ENCODE measurements at regions of chr1 and their contacts with region 1.

Region 1: GRCh38 chr1:154558575-154559465 is at the start of gene UBE2Q1:
- DNase-seq: peak; percentile 99
- H3K4me3 ChIP-seq: peak within 1 kb of the TSS; percentile 92
- H3K27ac ChIP-seq: peak within 1 kb of the TSS; percentile 67
- H3K4me1 ChIP-seq: peaks cover 26% of the 10 kb centered on the region
- H3K27me3 ChIP-seq: no peaks in the 10 kb centered on the region
- CTCF ChIP-seq: no peak
- POLR2A ChIP-seq: peak; percentile 57
- total RNA-seq, gene UBE2Q1: 85.4 and 97.2 TPM in 2 replicates

Region 2: GRCh38 chr1:154324669-154325582 is 233.9 kb before region 1 on chr1 and contains the start of gene ATP8B2:
- CTCF ChIA-PET with region 1: interaction called, 3 read pairs
- POLR2A ChIA-PET with region 1: no interaction called
- dilution Hi-C with region 1: no loop called
- intact Hi-C with region 1: loop called (anchors 2 kb)
- DNase-seq: peak; percentile 79
- H3K4me3 ChIP-seq: peak within 1 kb of the TSS; percentile 78 to 88 (median 85)
- H3K27ac ChIP-seq: peak within 1 kb of the TSS; percentile 52
- H3K4me1 ChIP-seq: peaks cover 22% of the 10 kb centered on the region
- H3K27me3 ChIP-seq: peaks cover 0 to 8% of the 10 kb centered on the region in 2 experiments
- CTCF ChIP-seq: peak; percentile 93 to 94
- POLR2A ChIP-seq: no peak
- total RNA-seq, gene ATP8B2: 60.0 and 64.7 TPM in 2 replicates

Region 3: DNA sequence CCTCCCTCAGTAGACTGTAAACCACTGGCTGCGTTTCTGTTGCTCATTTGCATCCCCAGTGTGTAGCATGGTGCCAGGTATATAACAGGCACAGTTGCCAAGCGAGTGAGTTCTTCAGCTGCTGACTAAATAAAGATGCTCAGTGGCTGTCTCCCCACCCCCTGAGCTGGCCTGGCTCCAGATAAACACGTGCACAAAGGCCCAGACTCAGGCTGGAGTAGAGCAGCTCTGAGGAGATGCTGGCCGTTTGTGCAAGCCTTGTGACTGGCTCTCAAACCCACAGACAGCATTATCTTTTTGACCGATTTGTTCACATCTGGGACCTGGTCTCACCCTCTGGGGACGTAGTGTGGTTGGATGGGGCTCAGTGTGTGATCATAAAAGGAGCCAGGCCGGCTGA is 15.9 kb after region 1 on chr1:
- CTCF ChIA-PET with region 1: interaction called, 13 read pairs
- POLR2A ChIA-PET with region 1: no interaction called
- dilution Hi-C with region 1: no loop called
- intact Hi-C with region 1: no loop called
- DNase-seq: no peak
- H3K4me3 ChIP-seq: no peak overlapping the region
- H3K27ac ChIP-seq: no peak overlapping the region
- H3K4me1 ChIP-seq: no peaks in the 10 kb centered on the region
- H3K27me3 ChIP-seq: peaks cover 0 to 3% of the 10 kb centered on the region in 2 experiments
- CTCF ChIP-seq: no peak
- POLR2A ChIP-seq: no peak

Region 4: DNA sequence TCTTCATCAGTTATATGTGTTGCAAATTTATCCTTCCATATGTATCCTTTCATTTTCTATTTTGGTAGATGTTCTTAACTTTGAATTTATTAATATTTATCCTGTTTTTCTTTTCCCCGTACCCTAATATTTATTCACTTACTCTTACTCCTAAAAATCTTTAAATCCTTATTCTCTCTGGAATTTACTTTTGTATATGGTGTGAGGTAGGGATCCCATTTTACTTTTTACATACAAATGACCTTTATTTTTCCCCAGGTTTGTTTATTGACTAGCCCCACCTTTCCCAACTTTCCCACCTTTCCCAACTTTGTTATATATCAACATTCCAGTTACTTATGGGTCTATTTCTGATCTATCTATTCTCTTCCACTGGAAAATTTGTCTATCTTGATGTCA is 70.9 kb after region 1 on chr1:
- CTCF ChIA-PET with region 1: no interaction called
- POLR2A ChIA-PET with region 1: no interaction called
- dilution Hi-C with region 1: no loop called
- intact Hi-C with region 1: no loop called
- DNase-seq: no peak
- H3K4me3 ChIP-seq: no peak overlapping the region
- H3K27ac ChIP-seq: no peak overlapping the region
- H3K4me1 ChIP-seq: peaks cover 7% of the 10 kb centered on the region
- H3K27me3 ChIP-seq: peaks cover 3 to 18% of the 10 kb centered on the region in 2 experiments
- CTCF ChIP-seq: no peak
- POLR2A ChIP-seq: no peak

Region 5: DNA sequence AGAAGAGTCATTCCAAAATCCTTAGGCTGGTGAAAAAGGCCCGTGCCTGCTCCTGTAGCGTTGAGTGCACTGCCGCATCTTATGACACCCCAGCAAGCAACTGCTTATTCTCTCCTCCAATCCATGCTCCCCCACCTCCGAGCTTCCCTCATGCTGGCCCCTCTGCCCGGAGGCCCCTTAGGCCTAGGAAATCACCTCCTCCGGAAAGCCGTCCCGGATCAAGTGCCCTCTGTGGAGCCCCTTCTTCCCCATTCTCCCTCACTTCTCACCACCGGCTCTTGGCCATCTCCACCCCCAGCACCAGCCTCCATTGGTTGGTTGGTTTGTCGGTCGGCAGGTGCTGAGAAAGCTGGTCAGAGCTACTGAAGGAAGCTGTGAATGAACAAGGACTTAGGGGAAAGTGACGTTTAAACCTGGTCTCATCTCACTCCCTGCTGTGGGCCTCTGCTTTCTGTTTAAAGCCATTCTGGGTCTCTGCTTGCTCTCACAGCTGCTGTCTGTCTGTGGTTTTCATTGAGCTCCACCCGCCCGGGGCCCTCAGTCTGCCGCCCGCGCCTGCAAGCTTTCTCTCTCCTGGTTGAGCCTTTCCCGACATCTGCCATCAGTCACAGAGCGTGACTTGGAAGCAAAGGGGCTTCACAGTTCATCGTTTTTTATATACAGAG is 189.1 kb after region 1 on chr1:
- CTCF ChIA-PET with region 1: interaction called, 3 read pairs
- POLR2A ChIA-PET with region 1: no interaction called
- dilution Hi-C with region 1: no loop called
- intact Hi-C with region 1: loop called (anchors 1 kb)
- DNase-seq: no peak
- H3K4me3 ChIP-seq: no peak overlapping the region
- H3K27ac ChIP-seq: no peak overlapping the region
- H3K4me1 ChIP-seq: no peaks in the 10 kb centered on the region
- H3K27me3 ChIP-seq: peaks cover 41 to 46% of the 10 kb centered on the region in 2 experiments
- CTCF ChIP-seq: no peak
- POLR2A ChIP-seq: no peak

Region 6: GRCh38 chr1:154884869-154885701 is 326.3 kb after region 1 on chr1:
- CTCF ChIA-PET with region 1: interaction called, 11 read pairs
- POLR2A ChIA-PET with region 1: no interaction called
- dilution Hi-C with region 1: no loop called
- intact Hi-C with region 1: no loop called
- DNase-seq: peak; percentile 92
- H3K4me3 ChIP-seq: no peak overlapping the region
- H3K27ac ChIP-seq: peak overlapping the region; percentile 32
- H3K4me1 ChIP-seq: peaks cover 18% of the 10 kb centered on the region
- H3K27me3 ChIP-seq: peaks cover 0 to 6% of the 10 kb centered on the region in 2 experiments
- CTCF ChIP-seq: no peak
- POLR2A ChIP-seq: peak; percentile 54

Region 7: GRCh38 chr1:155017041-155017945 is 458.5 kb after region 1 on chr1:
- CTCF ChIA-PET with region 1: interaction called, 10 read pairs
- POLR2A ChIA-PET with region 1: no interaction called
- dilution Hi-C with region 1: no loop called
- intact Hi-C with region 1: loop called (anchors 5 kb)
- DNase-seq: peak; percentile 95
- H3K4me3 ChIP-seq: peak overlapping the region in 1 of 3 experiments; percentile 39
- H3K27ac ChIP-seq: peak overlapping the region; percentile 36
- H3K4me1 ChIP-seq: peaks cover 9% of the 10 kb centered on the region
- H3K27me3 ChIP-seq: no peaks in the 10 kb centered on the region
- CTCF ChIP-seq: peak; percentile 100
- POLR2A ChIP-seq: peak; percentile 57

Measured in endothelial cell of umbilical vein (primary cell).